ENCODE measurements at regions of chr6 and their contacts with region 1.

Region 1: GRCh38 chr6:38012573-38012972 is 193.0 kb downstream of the ZFAND3 start:
- DNase-seq: peak; percentile 50
- ATAC-seq: peak; percentile 73
- H3K4me3 ChIP-seq: no peak overlapping the region
- H3K4me3 Mint-ChIP-seq: no peak overlapping the region
- H3K27ac ChIP-seq: no peak overlapping the region
- H3K27ac Mint-ChIP-seq: no peak overlapping the region
- H3K4me1 ChIP-seq: peaks cover 4 to 10% of the 10 kb centered on the region in 2 donors
- H3K4me1 Mint-ChIP-seq: peaks cover 33% of the 10 kb centered on the region
- H3K27me3 ChIP-seq: no peaks in the 10 kb centered on the region
- H3K27me3 Mint-ChIP-seq: no peaks in the 10 kb centered on the region
- CTCF ChIP-seq: peak; percentile 78

Region 2: GRCh38 chr6:37483917-37484785 is 528.4 kb before region 1 on chr6:
- CTCF ChIA-PET with region 1: no interaction called
- POLR2A ChIA-PET with region 1: no interaction called
- intact Hi-C with region 1: loop called (anchors 1 kb)
- DNase-seq: peak; percentile 81
- ATAC-seq: peak; percentile 91
- H3K4me3 ChIP-seq: no peak overlapping the region
- H3K4me3 Mint-ChIP-seq: no peak overlapping the region
- H3K27ac ChIP-seq: peak overlapping the region in 1 of 2 donors; percentile 19
- H3K27ac Mint-ChIP-seq: no peak overlapping the region
- H3K4me1 ChIP-seq: peaks cover 0 to 14% of the 10 kb centered on the region in 2 donors
- H3K4me1 Mint-ChIP-seq: peaks cover 9% of the 10 kb centered on the region
- H3K27me3 ChIP-seq: no peaks in the 10 kb centered on the region
- H3K27me3 Mint-ChIP-seq: no peaks in the 10 kb centered on the region
- CTCF ChIP-seq: peak; percentile 86

Region 3: DNA sequence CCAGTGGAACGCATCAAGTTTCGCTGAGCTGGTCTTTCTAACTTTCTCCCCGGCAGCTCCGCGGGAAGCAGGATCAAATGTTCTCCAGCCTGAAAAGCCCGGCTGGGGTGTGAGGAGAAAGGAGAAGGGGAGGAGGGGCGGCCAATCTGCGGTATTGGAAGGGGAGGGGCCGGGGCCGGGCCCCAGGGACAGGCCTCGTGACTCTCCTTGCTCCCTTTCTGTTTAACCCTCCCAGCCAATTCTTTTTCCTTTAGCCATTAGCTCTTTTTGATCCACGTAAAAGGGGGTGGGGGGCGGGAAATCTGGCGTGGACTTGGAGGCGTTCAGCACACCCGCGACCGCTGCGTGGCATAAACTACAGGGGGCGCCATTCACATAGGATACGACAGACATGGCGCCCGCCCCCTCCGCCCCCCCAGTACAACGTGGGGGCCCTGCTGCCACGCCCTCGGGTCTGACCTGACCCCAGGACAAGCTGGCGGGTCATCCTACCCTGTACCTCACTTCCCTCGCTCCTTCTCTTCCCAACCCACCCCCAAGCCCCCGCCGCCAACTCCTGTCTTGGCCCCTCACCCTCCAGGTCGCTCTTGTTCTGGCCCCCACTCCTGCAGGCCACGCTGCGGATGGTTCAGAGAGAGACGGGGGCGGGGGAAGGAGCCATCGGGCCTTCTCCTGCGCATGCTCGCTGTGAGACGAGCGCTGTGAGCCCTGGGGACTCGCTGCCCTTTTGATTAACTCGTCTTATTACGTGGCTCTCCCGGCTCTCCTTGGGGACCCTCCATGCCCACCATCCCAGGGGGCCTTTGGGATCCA is 307.1 kb before region 1 on chr6:
- CTCF ChIA-PET with region 1: interaction called, 4 read pairs
- POLR2A ChIA-PET with region 1: no interaction called
- intact Hi-C with region 1: loop called (anchors 2 kb)
- DNase-seq: peak; percentile 87
- ATAC-seq: peak; percentile 88
- H3K4me3 ChIP-seq: peak overlapping the region; percentile 3 to 69 (median 53)
- H3K4me3 Mint-ChIP-seq: peak overlapping the region; percentile 91
- H3K27ac ChIP-seq: peak overlapping the region; percentile 39 to 65
- H3K27ac Mint-ChIP-seq: peak overlapping the region; percentile 86
- H3K4me1 ChIP-seq: peaks cover 5 to 22% of the 10 kb centered on the region in 2 donors
- H3K4me1 Mint-ChIP-seq: peaks cover 26% of the 10 kb centered on the region
- H3K27me3 ChIP-seq: peaks cover 0 to 4% (median 0%) of the 10 kb centered on the region in 4 experiments
- H3K27me3 Mint-ChIP-seq: no peaks in the 10 kb centered on the region
- CTCF ChIP-seq: peak; percentile 83

Region 4: DNA sequence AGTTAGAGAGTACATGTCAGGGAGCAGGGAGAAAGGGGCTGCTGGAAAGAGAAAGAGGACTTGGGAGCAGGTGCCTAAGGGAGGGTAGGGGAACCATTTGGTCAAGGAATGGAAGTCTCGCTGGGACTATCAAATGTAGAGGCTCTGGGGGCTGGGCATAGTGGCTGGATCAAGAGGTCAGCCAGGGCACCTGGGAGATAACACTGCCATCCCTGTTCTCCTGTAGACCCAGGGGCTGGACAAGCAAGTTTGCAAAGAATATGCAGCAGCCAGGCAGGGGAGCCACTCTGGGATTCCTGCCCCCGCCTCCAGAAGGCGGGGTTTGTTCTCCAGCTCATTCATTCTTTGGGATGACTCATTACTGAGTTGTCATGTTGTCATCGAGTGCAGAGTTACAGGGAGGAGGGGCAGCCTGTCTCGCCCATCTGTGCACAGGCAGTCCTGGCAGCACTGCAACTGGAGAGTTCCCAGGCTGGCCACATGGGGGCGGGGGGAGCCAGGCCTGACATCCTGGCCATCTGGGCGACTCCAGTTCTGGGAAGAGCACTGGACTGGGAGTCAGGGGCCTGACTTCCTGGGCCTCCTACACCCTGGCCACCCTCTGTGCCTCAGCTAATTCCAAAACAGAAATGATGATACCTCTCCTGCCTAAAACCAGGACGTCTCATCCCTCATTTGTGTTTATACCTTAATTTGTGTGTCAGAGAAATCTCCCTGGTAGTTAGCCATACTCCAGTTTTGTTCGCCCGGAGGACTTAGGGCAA is 221.2 kb before region 1 on chr6:
- CTCF ChIA-PET with region 1: interaction called, 17 read pairs
- POLR2A ChIA-PET with region 1: no interaction called
- intact Hi-C with region 1: loop called (anchors 1 kb)
- DNase-seq: peak; percentile 72
- ATAC-seq: peak; percentile 100
- H3K4me3 ChIP-seq: no peak overlapping the region
- H3K4me3 Mint-ChIP-seq: no peak overlapping the region
- H3K27ac ChIP-seq: no peak overlapping the region
- H3K27ac Mint-ChIP-seq: peak overlapping the region; percentile 17
- H3K4me1 ChIP-seq: peaks cover 0 to 3% of the 10 kb centered on the region in 2 donors
- H3K4me1 Mint-ChIP-seq: peaks cover 6% of the 10 kb centered on the region
- H3K27me3 ChIP-seq: no peaks in the 10 kb centered on the region
- H3K27me3 Mint-ChIP-seq: peaks cover 7% of the 10 kb centered on the region
- CTCF ChIP-seq: peak; percentile 88

Region 5: GRCh38 chr6:37882724-37883413 is 129.7 kb before region 1 on chr6:
- CTCF ChIA-PET with region 1: interaction called, 13 read pairs
- POLR2A ChIA-PET with region 1: no interaction called
- intact Hi-C with region 1: loop called (anchors 10 kb)
- DNase-seq: no peak
- ATAC-seq: no peak
- H3K4me3 ChIP-seq: no peak overlapping the region
- H3K4me3 Mint-ChIP-seq: no peak overlapping the region
- H3K27ac ChIP-seq: no peak overlapping the region
- H3K27ac Mint-ChIP-seq: no peak overlapping the region
- H3K4me1 ChIP-seq: peaks cover 11 to 15% of the 10 kb centered on the region in 2 donors
- H3K4me1 Mint-ChIP-seq: peaks cover 64% of the 10 kb centered on the region
- H3K27me3 ChIP-seq: no peaks in the 10 kb centered on the region
- H3K27me3 Mint-ChIP-seq: no peaks in the 10 kb centered on the region
- CTCF ChIP-seq: no peak

Region 6: DNA sequence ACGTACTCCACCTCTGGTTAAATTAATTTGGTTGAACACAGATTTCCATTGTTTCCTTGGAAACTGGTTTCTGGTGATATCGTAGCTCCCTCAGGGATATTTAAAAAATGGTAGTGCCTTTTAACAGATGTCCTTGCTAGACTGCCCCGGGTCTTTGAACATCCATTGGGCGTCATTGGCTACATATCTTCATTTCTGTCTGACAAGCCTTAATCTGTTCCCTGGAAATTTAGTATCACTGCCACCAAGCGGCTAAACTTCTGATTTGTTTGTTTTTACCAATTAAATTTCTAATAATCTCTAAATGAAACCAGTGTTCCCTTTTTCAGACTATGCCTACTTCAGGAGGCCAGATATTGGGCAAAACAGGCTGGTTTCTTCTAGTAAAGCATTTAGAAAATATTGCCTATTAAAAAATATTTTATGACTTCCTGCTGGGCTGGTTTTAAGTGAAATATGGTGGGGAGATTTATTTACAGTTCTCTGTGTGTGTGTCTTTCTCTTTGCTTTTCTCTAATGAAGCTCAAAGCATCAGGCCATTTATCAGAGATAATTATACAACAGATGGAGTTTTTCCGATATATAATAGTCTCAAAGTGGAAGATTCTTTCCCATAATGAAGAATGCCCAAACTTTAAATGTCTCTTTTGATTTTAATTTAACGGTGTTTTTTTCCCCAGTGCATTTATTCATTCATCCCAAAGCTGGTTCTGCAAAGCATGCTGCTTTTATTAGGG is 56.4 kb after region 1 on chr6:
- CTCF ChIA-PET with region 1: no interaction called
- POLR2A ChIA-PET with region 1: no interaction called
- intact Hi-C with region 1: no loop called
- DNase-seq: no peak
- ATAC-seq: no peak
- H3K4me3 ChIP-seq: no peak overlapping the region
- H3K4me3 Mint-ChIP-seq: no peak overlapping the region
- H3K27ac ChIP-seq: no peak overlapping the region
- H3K27ac Mint-ChIP-seq: no peak overlapping the region
- H3K4me1 ChIP-seq: peaks cover 10 to 12% of the 10 kb centered on the region in 2 donors
- H3K4me1 Mint-ChIP-seq: peaks cover 49% of the 10 kb centered on the region
- H3K27me3 ChIP-seq: no peaks in the 10 kb centered on the region
- H3K27me3 Mint-ChIP-seq: no peaks in the 10 kb centered on the region
- CTCF ChIP-seq: no peak

Region 7: GRCh38 chr6:38149531-38149930 is 137.0 kb after region 1 on chr6:
- CTCF ChIA-PET with region 1: no interaction called
- POLR2A ChIA-PET with region 1: no interaction called
- intact Hi-C with region 1: no loop called
- DNase-seq: no peak
- ATAC-seq: no peak
- H3K4me3 ChIP-seq: no peak overlapping the region
- H3K4me3 Mint-ChIP-seq: no peak overlapping the region
- H3K27ac ChIP-seq: no peak overlapping the region
- H3K27ac Mint-ChIP-seq: no peak overlapping the region
- H3K4me1 ChIP-seq: peaks cover 0 to 12% of the 10 kb centered on the region in 2 donors
- H3K4me1 Mint-ChIP-seq: peaks cover 2% of the 10 kb centered on the region
- H3K27me3 ChIP-seq: no peaks in the 10 kb centered on the region
- H3K27me3 Mint-ChIP-seq: no peaks in the 10 kb centered on the region
- CTCF ChIP-seq: no peak

Region 8: GRCh38 chr6:38427492-38428210 is 415.1 kb after region 1 on chr6:
- CTCF ChIA-PET with region 1: no interaction called
- POLR2A ChIA-PET with region 1: no interaction called
- intact Hi-C with region 1: no loop called
- DNase-seq: peak; percentile 68
- ATAC-seq: peak; percentile 89
- H3K4me3 ChIP-seq: peak overlapping the region in 1 of 5 experiments; percentile 4
- H3K4me3 Mint-ChIP-seq: peak overlapping the region; percentile 77
- H3K27ac ChIP-seq: peak overlapping the region; percentile 37 to 50
- H3K27ac Mint-ChIP-seq: peak overlapping the region; percentile 92
- H3K4me1 ChIP-seq: peaks cover 20 to 23% of the 10 kb centered on the region in 2 donors
- H3K4me1 Mint-ChIP-seq: peaks cover 49% of the 10 kb centered on the region
- H3K27me3 ChIP-seq: no peaks in the 10 kb centered on the region
- H3K27me3 Mint-ChIP-seq: no peaks in the 10 kb centered on the region
- CTCF ChIP-seq: no peak